ENCODE measurements at regions of chr22 and their contacts with region 1.

Region 1: DNA sequence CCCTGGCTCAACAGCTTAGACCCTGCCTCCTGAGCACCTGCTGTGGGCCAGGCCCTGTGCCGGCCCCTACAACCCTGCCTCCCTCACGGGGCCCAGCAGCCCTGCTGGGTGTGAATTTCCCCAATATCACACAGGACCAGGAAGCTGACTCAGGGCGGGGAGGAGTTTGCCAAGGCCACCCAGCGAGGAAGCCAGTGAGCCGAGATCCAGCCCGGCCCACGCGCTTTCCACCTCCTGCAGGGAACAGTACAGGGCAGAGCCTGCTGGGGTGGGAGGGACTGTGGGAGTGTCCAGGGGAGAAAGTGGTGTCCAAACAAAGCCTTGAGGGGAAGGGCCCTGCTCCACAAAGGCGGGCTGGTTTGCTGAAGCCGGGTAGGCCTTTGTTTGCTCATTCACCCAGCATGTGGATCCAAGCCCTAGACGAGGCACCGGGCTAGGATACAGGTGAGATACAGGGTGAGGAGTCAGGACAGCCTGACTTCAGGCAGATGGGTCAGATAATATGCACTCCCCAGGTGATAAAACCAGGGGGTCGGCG is 26.8 kb downstream of the RPL3 start:
- DNase-seq: no peak
- ATAC-seq: peak; percentile 80
- H3K4me3 ChIP-seq: 0 out of 4 replicates have a peak overlapping the region, but pooled peaks of 1 of the 2 experiments have one; percentile 4
- H3K27ac ChIP-seq: peak overlapping the region; percentile 72
- H3K4me1 ChIP-seq: peaks cover 59% of the 10 kb centered on the region
- H3K27me3 ChIP-seq: no peaks in the 10 kb centered on the region
- CTCF ChIP-seq: no peak

Region 2: DNA sequence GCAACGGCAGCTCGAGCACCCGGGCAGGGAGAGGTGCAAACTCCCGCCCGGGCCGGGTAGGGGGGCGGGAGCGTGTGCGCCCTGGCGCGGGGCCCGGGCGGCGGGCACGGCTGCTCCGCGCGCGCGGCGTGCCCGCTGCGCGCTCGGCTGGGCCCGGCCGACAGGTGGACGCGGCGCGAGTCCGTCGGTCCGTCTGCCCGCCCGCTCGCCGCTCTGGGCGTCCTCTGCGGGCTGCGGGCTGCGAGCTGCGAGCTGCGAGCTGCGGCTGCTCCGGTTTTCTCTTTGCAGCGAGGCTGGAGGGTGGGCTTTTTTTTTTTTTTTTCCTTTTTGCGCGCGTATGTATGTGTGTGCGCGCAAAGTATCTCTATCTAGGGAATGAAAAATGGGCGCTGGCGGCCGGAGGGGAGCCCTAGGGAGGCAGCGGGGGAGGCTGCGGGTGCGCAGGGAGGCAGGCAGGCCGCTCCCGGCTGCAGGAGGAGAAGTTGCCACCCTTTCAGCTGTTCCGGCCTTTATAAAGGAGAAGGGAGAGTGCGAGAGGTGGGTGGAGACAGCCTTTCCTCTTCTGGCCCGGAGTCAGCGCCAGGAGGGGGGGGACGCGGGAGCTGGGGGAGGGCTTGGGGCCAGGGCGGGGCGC is 48.0 kb before region 1 on chr22 and contains the start of gene PDGFB:
- CTCF ChIA-PET with region 1: no interaction called
- POLR2A ChIA-PET with region 1: interaction called, 12 read pairs
- in situ Hi-C with region 1: no loop called
- intact Hi-C with region 1: no loop called
- DNase-seq: no peak
- ATAC-seq: peak; percentile 47
- H3K4me3 ChIP-seq: peak within 1 kb of the TSS; percentile 66 to 72
- H3K27ac ChIP-seq: peak within 1 kb of the TSS; percentile 88
- H3K4me1 ChIP-seq: peaks cover 21% of the 10 kb centered on the region
- H3K27me3 ChIP-seq: no peaks in the 10 kb centered on the region
- CTCF ChIP-seq: no peak
- total RNA-seq, gene PDGFB: 78.0 TPM

Region 3: DNA sequence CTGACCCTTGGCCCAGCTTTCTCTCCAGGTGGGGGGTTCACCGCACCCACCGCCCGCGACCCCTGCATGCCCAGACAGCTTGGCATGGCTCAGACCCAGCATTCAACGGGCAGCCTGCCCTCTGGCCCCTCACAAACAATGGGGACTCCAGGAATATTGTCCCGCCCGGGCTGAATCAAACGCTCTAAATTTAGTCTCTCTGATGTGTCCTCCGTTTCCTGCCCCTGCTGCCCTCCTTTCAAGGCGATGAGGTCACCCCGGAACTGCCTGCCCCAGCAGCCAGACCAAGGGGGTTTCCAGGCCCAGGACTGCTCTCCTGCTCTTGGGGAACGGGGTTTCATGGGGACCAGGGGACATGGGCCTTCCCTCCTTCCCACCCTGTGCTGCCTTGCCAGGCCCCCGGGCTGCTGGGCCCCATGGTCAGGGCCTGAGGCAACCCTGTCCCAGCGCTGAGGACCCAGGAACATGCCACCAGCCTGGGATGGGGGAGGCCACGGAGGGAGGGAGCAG is 37.8 kb before region 1 on chr22:
- CTCF ChIA-PET with region 1: no interaction called
- POLR2A ChIA-PET with region 1: no interaction called
- in situ Hi-C with region 1: no loop called
- intact Hi-C with region 1: loop called (anchors 5 kb)
- DNase-seq: no peak
- ATAC-seq: peak; percentile 25; the same call in 1 of the 2 replicates
- H3K4me3 ChIP-seq: no peak overlapping the region
- H3K27ac ChIP-seq: peak overlapping the region; percentile 88
- H3K4me1 ChIP-seq: peaks cover 70% of the 10 kb centered on the region
- H3K27me3 ChIP-seq: no peaks in the 10 kb centered on the region
- CTCF ChIP-seq: no peak

Region 4: GRCh38 chr22:39414886-39415285 is 122.3 kb after region 1 on chr22:
- CTCF ChIA-PET with region 1: no interaction called
- POLR2A ChIA-PET with region 1: no interaction called
- in situ Hi-C with region 1: no loop called
- intact Hi-C with region 1: no loop called
- DNase-seq: no peak
- ATAC-seq: no peak
- H3K4me3 ChIP-seq: no peak overlapping the region
- H3K27ac ChIP-seq: no peak overlapping the region
- H3K4me1 ChIP-seq: no peaks in the 10 kb centered on the region
- H3K27me3 ChIP-seq: no peaks in the 10 kb centered on the region
- CTCF ChIP-seq: no peak

Measured in Panc1 (cell line).